ENCODE measurements at regions of chr10 and their contacts with region 1.

Region 1: DNA sequence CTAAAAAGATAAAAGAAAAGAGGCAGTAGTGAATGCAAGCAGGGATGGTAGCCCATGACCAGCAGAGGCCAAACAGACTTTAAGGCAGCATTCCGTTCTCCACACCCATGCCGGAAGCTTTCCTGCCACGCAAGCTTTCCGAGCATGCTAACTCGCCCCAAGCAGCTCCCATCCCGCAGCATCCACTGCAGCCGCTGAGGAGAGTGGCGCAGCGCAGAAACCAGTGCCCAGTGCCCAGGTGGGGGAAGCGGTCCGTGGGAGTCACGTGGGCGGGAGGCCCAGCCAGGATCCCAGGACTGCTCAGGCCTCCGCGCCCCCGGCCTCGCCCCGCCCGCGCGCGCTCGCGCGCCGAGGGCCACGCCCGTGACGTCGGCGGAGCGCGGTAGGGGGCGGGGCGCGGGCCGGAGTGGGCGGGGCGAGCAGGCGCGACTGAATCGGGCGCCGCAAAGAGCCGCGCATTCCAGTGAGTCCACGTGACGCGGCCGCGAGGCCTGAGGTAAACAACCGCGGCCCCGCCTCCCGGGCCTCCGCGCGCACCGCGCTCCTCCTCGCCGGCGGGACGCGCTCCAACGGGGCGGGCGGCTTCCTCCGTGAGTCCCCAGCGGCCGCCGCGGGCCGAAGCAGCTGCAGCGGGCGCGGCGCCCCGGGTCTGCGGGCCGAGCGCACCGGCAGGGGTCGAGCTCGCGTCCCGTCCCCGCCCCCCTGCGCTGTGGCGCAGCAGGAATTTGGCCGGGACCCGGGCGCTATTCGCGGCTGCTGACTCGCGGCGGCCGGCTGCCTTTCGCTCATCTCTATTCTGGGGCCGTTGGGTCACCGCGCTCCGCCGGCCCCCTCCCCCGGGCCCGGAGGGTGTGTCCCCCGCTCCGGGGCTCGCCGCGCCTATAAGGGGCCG is at the start of gene OTUD1:
- DNase-seq: peak; percentile 98
- ATAC-seq: peak; percentile 97
- total RNA-seq, gene OTUD1: 33.9 TPM

Region 2: GRCh38 chr10:23345887-23346286 is 92.9 kb before region 1 on chr10:
- intact Hi-C with region 1: loop called (anchors 5 kb)
- DNase-seq: no peak
- ATAC-seq: peak; percentile 55

Measured in sciatic nerve (tissue), 2 donors.